Esophagus squamous epithelium (tissue), 5 donors: ENCODE measurements at regions of chr3 and their contacts with region 1.

Region 1: DNA sequence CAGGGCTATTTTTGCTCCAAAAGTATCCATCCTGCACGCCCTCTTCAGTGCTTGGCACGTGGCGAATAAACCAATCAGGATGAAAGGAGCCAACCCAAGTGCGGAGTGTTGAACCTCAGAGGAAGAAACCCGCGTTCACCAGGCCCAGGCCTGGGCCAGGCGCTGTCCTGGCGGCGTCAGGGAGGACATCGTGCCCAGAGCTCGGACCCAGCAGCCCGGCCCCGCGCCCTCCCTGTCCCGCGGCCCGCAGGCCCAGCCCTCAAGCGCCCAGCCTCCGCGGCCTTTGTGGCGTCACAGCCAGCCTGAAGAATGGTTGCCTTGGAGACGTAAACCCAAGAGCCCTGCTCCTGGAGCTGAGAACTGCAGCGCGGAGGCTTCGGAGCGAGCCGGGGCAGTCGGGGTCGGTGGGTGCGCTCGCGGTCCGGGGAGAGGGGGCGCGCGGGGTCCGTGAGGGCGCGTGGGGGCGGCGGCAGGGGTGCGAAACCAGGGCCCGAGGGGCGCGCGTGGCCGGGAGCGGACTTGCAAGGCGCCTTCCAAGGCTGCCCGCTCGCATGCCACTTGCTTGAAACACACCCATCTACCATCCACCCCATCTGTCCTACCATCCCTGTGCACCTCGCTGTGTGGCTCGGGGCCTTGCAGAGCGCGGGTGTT is at the start of gene CFAP100:
- DNase-seq: no peak
- H3K4me3 ChIP-seq: peak within 1 kb of the TSS in 3 of 4 donors; percentile 4 to 49 (median 37)
- H3K27ac ChIP-seq: no peak within 1 kb of the TSS
- H3K4me1 ChIP-seq: peaks cover 0 to 22% (median 3%) of the 10 kb centered on the region in 3 donors
- H3K27me3 ChIP-seq: peaks cover 0 to 44% (median 0%) of the 10 kb centered on the region in 4 donors
- CTCF ChIP-seq: no peak
- POLR2A ChIP-seq: no peak
- total RNA-seq, gene CFAP100: not detected

Region 2: DNA sequence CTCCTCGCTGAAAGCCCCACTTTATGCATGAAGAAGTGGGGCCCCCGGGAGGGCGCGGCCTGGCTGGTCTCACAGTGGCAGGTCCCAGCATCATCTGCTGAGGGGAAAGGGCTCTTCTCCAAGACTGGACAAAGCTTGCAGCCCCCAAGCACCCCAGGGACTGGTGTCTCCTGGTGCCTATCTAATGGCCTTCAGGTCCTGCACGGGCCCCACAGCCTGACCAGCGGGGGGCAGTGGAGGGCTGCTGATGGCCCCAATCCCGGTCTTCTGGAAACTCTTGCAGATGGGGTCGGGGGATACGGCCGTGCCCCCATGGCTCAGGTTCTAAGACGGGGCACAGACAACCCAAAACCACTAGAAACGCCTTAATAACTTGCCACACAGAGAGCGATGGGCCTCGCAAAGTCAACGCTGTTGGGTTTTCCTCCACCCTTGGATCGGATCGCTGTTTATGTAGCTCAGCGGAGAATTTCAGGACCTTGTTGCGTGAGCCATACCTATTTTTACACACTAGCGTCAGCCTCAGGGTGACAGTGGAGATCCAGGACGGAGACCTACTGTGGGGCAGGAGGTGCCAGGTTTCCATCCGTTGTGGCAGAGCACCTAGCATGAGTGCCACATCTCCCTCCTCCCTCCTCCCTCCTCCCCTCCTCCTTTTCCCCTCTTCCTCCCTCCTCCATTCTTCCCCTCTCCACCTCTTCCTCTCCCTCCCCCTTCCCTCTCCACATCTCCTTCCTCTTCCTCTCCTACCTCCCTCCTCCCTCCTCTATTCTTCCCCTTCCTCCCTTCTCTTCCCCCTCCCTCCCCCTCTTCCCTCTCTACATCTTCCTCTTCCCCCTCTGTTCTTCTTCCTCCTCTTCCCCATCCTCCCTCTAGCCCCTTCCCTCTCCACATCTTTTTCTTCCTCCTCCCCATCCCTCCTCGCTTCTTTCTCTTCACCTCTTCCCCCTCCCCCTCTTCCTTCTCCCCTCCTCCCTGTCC is 135.0 kb before region 1 on chr3:
- intact Hi-C with region 1: loop called (anchors 10 kb)
- DNase-seq: no peak
- H3K4me3 ChIP-seq: peak overlapping the region in 1 of 4 donors; percentile 44
- H3K27ac ChIP-seq: peak overlapping the region in 3 of 4 donors; percentile 31 to 53 (median 52)
- H3K4me1 ChIP-seq: peaks cover 0 to 18% (median 4%) of the 10 kb centered on the region in 3 donors
- H3K27me3 ChIP-seq: peaks cover 0 to 22% (median 0%) of the 10 kb centered on the region in 4 donors
- CTCF ChIP-seq: peak in 5 of 6 experiments; percentile 43 to 65 (median 61)
- POLR2A ChIP-seq: no peak